Uterus (tissue), 4 donors: ENCODE measurements at regions of chr10 and their contacts with region 1.

Region 1: GRCh38 chr10:123132576-123133477 is 2.9 kb upstream of the HMX3 start:
- DNase-seq: peak; percentile 74
- H3K4me3 ChIP-seq: no peak overlapping the region
- H3K27ac ChIP-seq: no peak overlapping the region
- H3K4me1 ChIP-seq: peaks cover 0 to 29% of the 10 kb centered on the region in 2 donors
- H3K27me3 ChIP-seq: peaks cover 4 to 60% of the 10 kb centered on the region in 2 donors
- CTCF ChIP-seq: peak; percentile 67 to 84 (median 78)
- POLR2A ChIP-seq: no peak

Region 2: GRCh38 chr10:122999347-122999746 is 133.5 kb before region 1 on chr10:
- intact Hi-C with region 1: no loop called
- DNase-seq: no peak
- H3K4me3 ChIP-seq: no peak overlapping the region
- H3K27ac ChIP-seq: no peak overlapping the region
- H3K4me1 ChIP-seq: no peaks in the 10 kb centered on the region
- H3K27me3 ChIP-seq: no peaks in the 10 kb centered on the region
- CTCF ChIP-seq: no peak
- POLR2A ChIP-seq: no peak

Region 3: GRCh38 chr10:123213192-123213591 is 80.4 kb after region 1 on chr10:
- intact Hi-C with region 1: no loop called
- DNase-seq: no peak
- H3K4me3 ChIP-seq: no peak overlapping the region
- H3K27ac ChIP-seq: no peak overlapping the region
- H3K4me1 ChIP-seq: no peaks in the 10 kb centered on the region
- H3K27me3 ChIP-seq: no peaks in the 10 kb centered on the region
- CTCF ChIP-seq: no peak
- POLR2A ChIP-seq: no peak

Region 4: DNA sequence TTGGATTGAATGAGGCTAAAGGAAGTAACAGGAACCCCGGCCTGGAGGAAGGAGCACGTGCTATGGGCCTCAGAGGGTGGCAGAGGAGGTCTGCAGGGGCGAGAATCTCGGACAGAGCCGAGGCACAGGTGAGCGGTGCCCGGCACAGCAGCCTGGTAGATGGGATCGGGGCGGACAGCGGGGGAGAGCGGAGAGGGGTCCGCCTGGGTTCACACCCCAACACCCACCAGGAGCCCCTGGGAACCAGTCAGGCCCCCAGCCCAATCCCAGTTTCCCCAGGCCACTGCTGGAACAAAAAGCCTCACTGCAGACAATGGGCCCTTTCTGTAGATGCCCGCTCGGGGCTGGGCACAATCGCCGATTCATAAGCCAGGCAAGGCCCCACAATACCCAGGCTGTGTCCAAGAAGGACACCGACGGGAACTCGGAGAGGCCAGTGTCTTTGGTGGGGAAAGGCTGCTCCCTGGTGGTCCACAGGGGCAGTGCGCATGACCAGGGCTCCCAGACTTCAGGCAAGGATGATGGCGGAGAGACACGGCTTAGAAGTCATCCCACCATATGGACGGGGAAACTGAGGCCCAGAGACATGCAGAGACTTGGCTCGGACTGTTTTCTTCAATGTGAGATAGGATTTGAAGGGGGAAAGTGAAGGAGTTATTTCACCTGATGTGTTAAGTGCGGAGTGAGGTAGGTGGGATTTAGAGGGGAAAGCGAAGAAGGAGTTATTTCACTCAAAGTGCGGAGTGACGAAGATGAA is 426.4 kb after region 1 on chr10:
- intact Hi-C with region 1: loop called (anchors 10 kb)
- DNase-seq: peak; percentile 24 to 52
- H3K4me3 ChIP-seq: no peak overlapping the region
- H3K27ac ChIP-seq: no peak overlapping the region
- H3K4me1 ChIP-seq: no peaks in the 10 kb centered on the region
- H3K27me3 ChIP-seq: no peaks in the 10 kb centered on the region
- CTCF ChIP-seq: peak; percentile 76 to 93 (median 86)
- POLR2A ChIP-seq: no peak